ENCODE measurements at regions of chr1 and their contacts with region 1.

Region 1: DNA sequence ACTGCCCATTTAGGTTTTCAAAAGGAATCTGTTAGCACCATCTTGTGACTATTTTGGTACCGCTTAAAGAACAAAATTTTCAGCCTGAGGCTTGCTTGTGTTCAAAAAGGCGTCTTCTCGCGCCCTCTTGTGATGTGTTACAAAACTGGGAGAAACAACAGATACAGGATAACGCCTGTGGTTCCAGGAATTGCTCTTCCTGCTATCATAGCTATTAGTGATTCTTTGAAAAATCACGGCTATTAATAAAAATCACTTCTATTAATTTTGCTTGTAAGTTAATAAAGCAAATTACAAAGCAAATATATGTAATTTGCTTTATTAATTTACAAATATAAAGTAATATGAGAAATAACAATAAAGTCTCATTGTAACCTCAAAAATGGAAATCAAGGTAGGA is 82.2 kb upstream of the ABCD3 start:
- DNase-seq: peak; percentile 91
- H3K4me3 ChIP-seq: no peak overlapping the region
- H3K27ac ChIP-seq: no peak overlapping the region
- H3K4me1 ChIP-seq: no peaks in the 10 kb centered on the region
- H3K27me3 ChIP-seq: no peaks in the 10 kb centered on the region
- CTCF ChIP-seq: peak; percentile 96

Region 2: DNA sequence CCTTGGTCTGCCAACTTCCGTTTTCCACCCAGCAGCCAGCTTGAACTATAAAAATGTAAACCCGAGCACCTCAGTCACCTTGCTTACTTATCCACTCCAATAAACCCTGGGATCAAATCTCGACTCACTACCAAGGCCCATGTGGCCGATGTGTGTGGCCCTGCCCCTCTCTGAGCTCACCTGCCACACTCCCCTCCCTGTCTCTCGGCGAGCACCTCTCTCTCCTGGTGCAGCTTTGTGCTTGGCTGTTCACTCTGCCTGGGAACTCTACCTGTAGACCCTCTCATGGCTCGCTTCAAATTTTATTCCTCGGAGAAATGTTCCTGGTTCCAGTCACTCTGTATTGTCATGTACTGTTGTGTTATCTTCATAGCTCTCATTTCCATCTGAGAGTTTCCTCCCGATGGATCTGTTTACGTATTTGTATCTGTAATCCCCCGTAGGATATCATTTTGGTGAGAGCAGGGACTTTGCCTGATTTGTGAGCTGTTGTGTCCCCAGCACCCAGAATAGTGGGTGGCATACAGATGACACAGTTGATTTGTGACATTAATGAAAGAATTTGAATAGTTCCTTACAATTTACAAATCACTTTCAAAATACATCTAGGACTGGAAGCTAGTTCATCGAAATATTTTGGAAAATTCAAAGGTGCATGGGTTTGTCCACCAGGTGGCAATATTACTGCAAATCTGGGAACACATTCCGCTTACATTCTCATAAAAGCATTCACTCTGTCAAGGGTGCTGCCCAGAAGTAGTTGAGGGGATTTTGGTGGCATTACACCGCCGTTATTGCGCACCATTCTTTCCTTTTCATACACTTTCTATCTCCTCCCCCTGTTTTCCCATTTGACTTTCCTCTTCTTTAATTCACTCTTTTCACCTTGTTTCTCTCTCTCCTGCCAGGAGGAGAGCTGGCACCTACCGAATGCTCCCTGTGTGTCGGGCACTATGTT is 310.3 kb before region 1 on chr1:
- CTCF ChIA-PET with region 1: interaction called, 30 read pairs
- POLR2A ChIA-PET with region 1: no interaction called
- intact Hi-C with region 1: loop called (anchors 1 kb)
- DNase-seq: peak; percentile 76
- H3K4me3 ChIP-seq: no peak overlapping the region
- H3K27ac ChIP-seq: no peak overlapping the region
- H3K4me1 ChIP-seq: no peaks in the 10 kb centered on the region
- H3K27me3 ChIP-seq: no peaks in the 10 kb centered on the region
- CTCF ChIP-seq: peak; percentile 74

Region 3: GRCh38 chr1:94045465-94046056 is 290.4 kb before region 1 on chr1:
- CTCF ChIA-PET with region 1: interaction called, 74 read pairs
- POLR2A ChIA-PET with region 1: no interaction called
- intact Hi-C with region 1: loop called (anchors 1 kb)
- DNase-seq: peak; percentile 96
- H3K4me3 ChIP-seq: peak overlapping the region; percentile 13
- H3K27ac ChIP-seq: no peak overlapping the region
- H3K4me1 ChIP-seq: peaks cover 17% of the 10 kb centered on the region
- H3K27me3 ChIP-seq: no peaks in the 10 kb centered on the region
- CTCF ChIP-seq: peak; percentile 87

Region 4: DNA sequence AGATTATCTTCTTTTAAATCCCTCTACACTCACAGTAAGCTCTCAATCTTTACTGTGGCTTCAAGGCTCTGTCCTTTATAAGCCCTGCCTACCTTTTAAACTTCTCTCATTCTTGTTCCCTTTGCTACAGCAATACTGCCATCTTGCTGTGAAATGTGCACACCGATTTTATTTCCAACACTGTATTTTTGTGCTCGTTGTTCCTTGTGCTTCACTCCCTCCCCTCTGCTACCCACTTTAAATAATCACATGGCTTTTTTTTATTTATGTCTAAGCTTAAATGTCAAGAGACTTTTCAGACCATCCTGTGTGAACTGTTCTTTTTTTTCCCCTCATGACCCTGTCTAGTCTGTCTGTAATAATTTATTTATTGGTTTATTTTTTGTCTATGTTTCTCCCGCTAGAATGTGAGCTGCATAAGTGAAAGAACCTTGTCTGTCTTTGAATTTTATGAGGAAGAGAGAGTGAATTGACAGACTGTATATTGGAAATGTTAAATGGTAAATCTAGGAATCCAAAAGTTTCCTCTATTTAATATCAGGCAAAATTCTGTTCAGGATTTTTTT is 127.9 kb after region 1 on chr1:
- CTCF ChIA-PET with region 1: interaction called, 10 read pairs
- POLR2A ChIA-PET with region 1: no interaction called
- intact Hi-C with region 1: loop called (anchors 5 kb)
- DNase-seq: peak; percentile 70
- H3K4me3 ChIP-seq: no peak overlapping the region
- H3K27ac ChIP-seq: no peak overlapping the region
- H3K4me1 ChIP-seq: no peaks in the 10 kb centered on the region
- H3K27me3 ChIP-seq: no peaks in the 10 kb centered on the region
- CTCF ChIP-seq: peak; percentile 73